ENCODE measurements at regions of chr20 and their contacts with region 1.

Region 1: DNA sequence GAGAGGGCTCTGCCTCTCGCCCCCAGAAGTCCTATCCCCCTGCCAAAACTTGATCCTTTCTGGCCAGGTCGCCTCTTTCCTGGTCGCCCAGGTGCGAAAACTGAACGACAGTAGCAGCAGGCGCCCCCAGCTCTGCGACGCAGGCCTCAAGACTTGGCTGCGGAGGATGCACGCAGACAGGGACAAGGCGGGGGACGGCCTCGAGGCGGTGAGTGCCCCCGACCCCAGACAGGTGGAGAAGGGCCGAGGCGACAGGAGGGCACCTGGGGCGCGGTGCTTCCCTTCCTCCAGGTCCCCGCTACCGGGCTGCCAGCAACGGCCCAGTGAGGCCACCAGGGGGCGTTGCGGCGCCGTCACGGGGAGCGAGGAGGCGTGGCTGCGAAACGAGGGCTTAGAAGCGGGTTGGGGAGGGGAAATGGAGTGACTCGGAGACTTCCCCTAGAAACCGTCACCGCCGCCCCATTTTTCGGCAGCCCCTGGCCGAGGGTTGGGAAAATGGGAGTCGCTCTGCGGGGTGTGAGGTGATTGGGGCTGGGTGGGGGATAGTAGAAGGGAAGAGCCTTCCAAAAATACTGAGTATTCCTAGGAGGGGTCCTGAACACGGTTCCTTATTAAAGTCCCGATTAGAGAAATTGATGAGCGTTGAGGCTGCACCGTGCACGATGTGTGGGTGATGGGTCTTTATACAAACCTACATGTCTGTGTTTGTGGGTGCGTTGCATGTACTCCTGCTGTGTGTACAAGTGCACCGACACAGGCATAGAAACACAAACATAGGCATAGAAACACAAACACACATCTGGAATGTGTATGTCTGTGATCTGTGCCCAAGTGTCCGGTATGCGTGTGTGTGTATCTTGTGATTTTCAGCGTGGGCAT is 44.6 kb downstream of the ARHGAP40 start:
- H3K4me3 ChIP-seq: peak overlapping the region; percentile 13
- H3K27ac ChIP-seq: no peak overlapping the region
- H3K4me1 ChIP-seq: no peaks in the 10 kb centered on the region
- CTCF ChIP-seq: peak; percentile 97

Region 2: GRCh38 chr20:38504368-38505090 is 141.7 kb before region 1 on chr20:
- CTCF ChIA-PET with region 1: no interaction called
- POLR2A ChIA-PET with region 1: no interaction called
- H3K4me3 ChIP-seq: no peak overlapping the region
- H3K27ac ChIP-seq: no peak overlapping the region
- H3K4me1 ChIP-seq: no peaks in the 10 kb centered on the region
- CTCF ChIP-seq: no peak

Region 3: GRCh38 chr20:38599410-38599938 is 46.7 kb before region 1 on chr20:
- CTCF ChIA-PET with region 1: no interaction called
- POLR2A ChIA-PET with region 1: no interaction called
- H3K4me3 ChIP-seq: no peak overlapping the region
- H3K27ac ChIP-seq: no peak overlapping the region
- H3K4me1 ChIP-seq: no peaks in the 10 kb centered on the region; the same call in 1 of the 2 replicates
- CTCF ChIP-seq: no peak

Region 4: GRCh38 chr20:38658879-38659596 is 12.8 kb after region 1 on chr20:
- CTCF ChIA-PET with region 1: interaction called, 13 read pairs
- POLR2A ChIA-PET with region 1: no interaction called
- H3K4me3 ChIP-seq: no peak overlapping the region
- H3K27ac ChIP-seq: no peak overlapping the region
- H3K4me1 ChIP-seq: no peaks in the 10 kb centered on the region
- CTCF ChIP-seq: peak; percentile 26; the same call in 1 of the 2 replicates

Region 5: GRCh38 chr20:38730989-38731737 is 84.9 kb after region 1 on chr20:
- CTCF ChIA-PET with region 1: interaction called, 27 read pairs
- POLR2A ChIA-PET with region 1: no interaction called
- H3K4me3 ChIP-seq: peak overlapping the region; percentile 9
- H3K27ac ChIP-seq: no peak overlapping the region
- H3K4me1 ChIP-seq: no peaks in the 10 kb centered on the region
- CTCF ChIP-seq: peak; percentile 93

Region 6: GRCh38 chr20:38748097-38748860 is 102.1 kb after region 1 on chr20 and contains the start of gene ACTR5:
- CTCF ChIA-PET with region 1: interaction called, 116 read pairs
- POLR2A ChIA-PET with region 1: no interaction called
- H3K4me3 ChIP-seq: peak within 1 kb of the TSS; percentile 88
- H3K27ac ChIP-seq: peak within 1 kb of the TSS; percentile 39; the same call in 1 of the 2 replicates
- H3K4me1 ChIP-seq: no peaks in the 10 kb centered on the region
- CTCF ChIP-seq: no peak

Region 7: DNA sequence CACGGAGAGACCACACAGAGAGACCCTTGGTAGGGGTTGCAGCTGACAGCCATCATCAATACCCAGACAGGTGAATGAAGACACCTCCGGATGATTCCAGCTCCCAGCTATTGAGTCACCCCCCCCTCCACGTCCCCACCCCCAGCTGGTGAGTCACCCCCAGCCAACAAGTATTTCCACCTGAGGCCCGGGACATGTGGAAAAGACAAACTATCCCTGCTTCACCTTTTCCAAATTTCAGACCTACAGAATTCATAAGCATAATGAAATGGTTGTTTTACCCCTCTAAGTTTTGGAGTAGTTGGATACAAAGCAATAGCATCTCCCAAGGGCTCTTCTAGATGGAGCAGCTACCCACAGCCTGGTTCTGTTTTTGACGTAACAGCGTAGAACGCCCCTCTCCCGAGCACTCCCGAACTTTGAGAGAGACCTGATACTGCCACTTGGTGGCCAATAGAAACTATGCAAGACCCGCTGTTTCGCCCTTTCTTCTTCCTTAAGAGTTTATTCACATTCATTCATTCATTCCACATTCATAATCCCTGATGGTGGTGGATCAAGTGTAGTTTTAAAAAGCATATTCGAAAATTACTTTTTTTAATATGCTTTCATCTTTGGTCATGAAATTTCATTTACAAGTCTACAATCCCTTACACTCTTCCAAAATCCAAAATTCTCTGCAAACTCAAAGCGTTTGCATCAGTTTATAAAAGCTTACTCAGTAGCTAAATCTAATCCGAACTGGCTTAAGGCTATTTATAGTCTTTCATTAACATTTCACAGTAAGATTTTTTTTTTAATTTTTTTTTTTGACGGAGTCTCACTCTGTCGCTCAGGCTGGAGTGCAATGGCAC is 144.2 kb after region 1 on chr20:
- CTCF ChIA-PET with region 1: interaction called, 23 read pairs
- POLR2A ChIA-PET with region 1: no interaction called
- H3K4me3 ChIP-seq: no peak overlapping the region
- H3K27ac ChIP-seq: no peak overlapping the region
- H3K4me1 ChIP-seq: no peaks in the 10 kb centered on the region
- CTCF ChIP-seq: peak; percentile 46

Region 8: DNA sequence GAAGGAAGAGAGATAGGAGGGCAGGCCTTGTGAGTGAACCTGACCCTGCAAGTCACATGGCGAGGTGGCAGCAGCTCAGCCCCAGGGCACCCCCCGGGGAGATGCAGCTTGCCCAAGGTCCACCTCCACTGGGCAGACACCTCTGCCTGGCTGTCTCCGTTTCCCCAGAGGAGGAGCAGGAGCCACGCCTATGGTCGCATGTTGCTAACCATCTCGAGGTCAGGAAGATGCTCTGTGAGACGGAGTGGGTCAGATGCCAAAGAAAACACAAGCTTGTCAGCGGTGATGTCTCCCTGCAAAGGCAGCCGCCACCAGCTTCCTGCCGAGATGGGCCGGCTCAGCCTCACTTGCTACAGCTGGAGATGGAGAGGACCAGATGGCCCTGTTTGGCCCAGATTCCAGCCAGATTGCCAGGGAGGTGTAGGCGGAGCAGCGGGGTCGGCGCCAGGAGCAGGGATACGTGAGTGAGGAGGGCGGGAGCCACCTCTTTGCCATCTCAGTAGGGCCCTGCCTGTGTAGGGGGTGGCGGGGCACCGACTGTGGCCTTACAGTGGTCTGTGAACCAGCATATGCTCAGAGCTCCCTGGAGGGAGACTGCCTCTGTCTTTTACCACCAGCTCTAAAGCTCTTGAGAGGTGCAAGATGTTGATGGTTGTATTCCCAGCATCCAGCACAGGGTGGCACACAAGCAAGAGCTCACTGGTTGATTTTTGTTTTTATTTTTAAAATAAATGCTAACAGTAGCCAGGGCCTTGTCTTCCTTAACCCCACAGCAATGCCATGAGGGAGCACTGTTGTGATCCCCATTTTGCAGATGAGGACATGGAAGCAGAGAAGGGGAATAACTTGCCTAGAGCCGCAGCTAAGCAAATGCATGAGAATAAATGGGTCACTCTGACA is 237.1 kb after region 1 on chr20:
- CTCF ChIA-PET with region 1: no interaction called
- POLR2A ChIA-PET with region 1: no interaction called
- H3K4me3 ChIP-seq: no peak overlapping the region
- H3K27ac ChIP-seq: no peak overlapping the region
- H3K4me1 ChIP-seq: no peaks in the 10 kb centered on the region
- CTCF ChIP-seq: no peak

Measured in HEK293 (cell line).